ENCODE measurements at regions of chr3 and their contacts with region 1.

Region 1: GRCh38 chr3:184250167-184250828 is 826 bp downstream of the EEF1AKMT4 start:
- DNase-seq: peak; percentile 90
- H3K4me3 ChIP-seq: peak overlapping the region; percentile 74 to 97 (median 79)
- H3K27ac ChIP-seq: peak overlapping the region; percentile 73
- H3K4me1 ChIP-seq: peaks cover 6% of the 10 kb centered on the region
- H3K27me3 ChIP-seq: no peaks in the 10 kb centered on the region
- CTCF ChIP-seq: peak; percentile 96 to 98

Region 2: DNA sequence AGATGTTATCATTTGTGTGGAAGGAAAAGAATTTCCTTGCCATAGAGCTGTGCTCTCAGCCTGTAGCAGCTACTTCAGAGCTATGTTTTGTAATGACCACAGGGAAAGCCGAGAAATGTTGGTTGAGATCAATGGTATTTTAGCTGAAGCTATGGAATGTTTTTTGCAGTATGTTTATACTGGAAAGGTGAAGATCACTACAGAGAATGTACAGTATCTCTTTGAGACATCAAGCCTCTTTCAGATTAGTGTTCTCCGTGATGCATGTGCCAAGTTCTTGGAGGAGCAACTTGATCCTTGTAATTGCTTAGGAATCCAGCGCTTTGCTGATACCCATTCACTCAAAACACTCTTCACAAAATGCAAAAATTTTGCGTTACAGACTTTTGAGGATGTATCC is 599.7 kb before region 1 on chr3:
- CTCF ChIA-PET with region 1: no interaction called
- dilution Hi-C with region 1: no loop called
- in situ Hi-C with region 1: no loop called
- intact Hi-C with region 1: no loop called
- DNase-seq: no peak
- H3K4me3 ChIP-seq: no peak overlapping the region
- H3K27ac ChIP-seq: no peak overlapping the region
- H3K4me1 ChIP-seq: no peaks in the 10 kb centered on the region
- H3K27me3 ChIP-seq: no peaks in the 10 kb centered on the region
- CTCF ChIP-seq: no peak

Region 3: DNA sequence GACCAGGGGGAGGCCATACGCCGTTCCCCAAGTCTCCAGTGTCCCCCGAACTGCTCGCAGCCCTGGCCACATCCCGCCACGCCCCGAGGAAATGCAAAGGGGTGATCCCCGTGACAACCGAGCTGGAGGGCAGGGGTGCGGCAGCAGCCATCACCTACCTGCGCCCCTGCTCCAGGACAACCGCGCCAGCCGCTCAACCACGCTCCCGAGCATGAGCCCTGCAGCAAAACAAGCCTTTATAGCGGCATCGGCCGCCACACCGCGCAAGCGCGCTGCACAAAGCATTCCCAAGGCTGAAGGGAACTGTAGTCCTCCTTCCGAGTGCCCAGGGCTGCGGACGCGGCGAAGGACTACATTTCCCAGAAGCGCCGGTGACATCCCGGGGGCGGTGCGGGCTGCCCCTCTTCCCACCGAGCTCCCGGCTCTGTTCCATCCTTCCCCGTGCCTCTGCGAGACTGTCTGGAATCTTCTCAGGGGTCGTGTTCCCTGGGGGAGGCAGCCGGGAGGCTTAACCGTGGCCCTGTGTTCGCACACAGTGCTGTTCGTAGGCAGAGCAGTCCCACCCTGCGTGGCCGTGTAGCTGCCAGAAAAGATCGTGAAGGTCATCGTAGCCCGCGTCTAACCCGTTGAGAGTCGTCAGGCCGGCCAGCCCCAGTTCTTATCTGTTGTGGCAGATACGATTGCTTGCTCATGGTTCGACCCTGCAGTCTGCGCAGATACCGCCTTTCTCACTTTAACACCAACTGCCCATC is 232.4 kb before region 1 on chr3 and contains the start of gene ABCC5:
- CTCF ChIA-PET with region 1: interaction called, 3 read pairs
- dilution Hi-C with region 1: no loop called
- in situ Hi-C with region 1: no loop called
- intact Hi-C with region 1: loop called (anchors 1 kb)
- DNase-seq: peak; percentile 87
- H3K4me3 ChIP-seq: peak within 1 kb of the TSS; percentile 97 to 100 (median 100)
- H3K27ac ChIP-seq: peak within 1 kb of the TSS; percentile 35
- H3K4me1 ChIP-seq: peaks cover 17% of the 10 kb centered on the region
- H3K27me3 ChIP-seq: no peaks in the 10 kb centered on the region
- CTCF ChIP-seq: no peak
- total RNA-seq, gene ABCC5: 17.3 to 24.1 TPM

Region 4: GRCh38 chr3:184145111-184145524 is 105.2 kb before region 1 on chr3:
- CTCF ChIA-PET with region 1: no interaction called
- dilution Hi-C with region 1: no loop called
- in situ Hi-C with region 1: no loop called
- intact Hi-C with region 1: loop called (anchors 1 kb)
- DNase-seq: peak; percentile 67
- H3K4me3 ChIP-seq: no peak overlapping the region
- H3K27ac ChIP-seq: no peak overlapping the region
- H3K4me1 ChIP-seq: no peaks in the 10 kb centered on the region
- H3K27me3 ChIP-seq: no peaks in the 10 kb centered on the region
- CTCF ChIP-seq: peak; percentile 74 to 80

Region 5: DNA sequence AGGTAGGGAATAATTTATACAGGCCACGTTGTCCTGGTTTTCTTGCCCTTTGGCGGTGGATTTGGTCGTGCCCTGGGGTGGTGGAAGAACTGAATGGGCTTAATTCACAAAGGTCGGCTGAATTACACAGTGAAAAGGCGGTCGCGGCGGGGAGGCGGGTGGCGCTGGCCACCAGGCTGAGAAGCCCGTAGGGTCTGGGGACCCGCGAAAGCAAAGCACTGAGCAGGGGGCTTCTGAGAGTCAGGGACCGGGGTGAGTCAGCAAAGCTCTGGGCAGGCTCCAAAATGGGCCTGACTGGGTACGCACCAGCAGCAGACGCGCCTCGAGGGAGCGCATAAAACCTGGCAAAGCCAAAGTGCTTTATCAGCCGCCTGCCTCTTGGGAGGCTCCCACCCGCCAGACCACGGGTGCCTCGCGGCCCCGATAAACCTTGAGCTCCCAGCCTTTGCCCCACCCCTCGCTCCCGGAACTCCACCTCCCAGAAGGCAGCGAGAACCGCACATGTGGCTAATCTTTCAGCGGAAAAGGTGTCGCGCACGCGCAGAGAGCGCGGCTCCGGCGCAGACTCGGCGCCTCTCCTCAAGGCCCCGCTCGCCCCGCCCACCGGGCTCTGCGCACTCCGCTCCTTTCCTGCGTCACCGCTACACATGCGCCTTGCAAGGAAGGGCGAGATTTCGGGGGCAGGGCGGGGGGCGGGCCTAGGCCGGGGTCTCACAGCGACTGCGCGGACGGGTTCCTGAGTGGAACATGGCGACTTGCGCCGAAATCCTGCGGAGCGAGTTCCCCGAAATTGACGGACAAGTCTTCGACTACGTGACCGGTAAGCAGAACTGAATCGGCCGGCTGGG is 64.6 kb before region 1 on chr3 and contains the start of gene ABCF3:
- CTCF ChIA-PET with region 1: no interaction called
- dilution Hi-C with region 1: no loop called
- in situ Hi-C with region 1: no loop called
- intact Hi-C with region 1: loop called (anchors 2 kb)
- DNase-seq: peak; percentile 98
- H3K4me3 ChIP-seq: peak within 1 kb of the TSS; percentile 44 to 95 (median 71)
- H3K27ac ChIP-seq: peak within 1 kb of the TSS; percentile 54
- H3K4me1 ChIP-seq: peaks cover 19% of the 10 kb centered on the region
- H3K27me3 ChIP-seq: no peaks in the 10 kb centered on the region
- CTCF ChIP-seq: no peak
- total RNA-seq, gene ABCF3: 50.8 to 58.2 TPM

Region 6: GRCh38 chr3:184209146-184209923 is 41.0 kb before region 1 on chr3:
- CTCF ChIA-PET with region 1: no interaction called
- dilution Hi-C with region 1: no loop called
- in situ Hi-C with region 1: no loop called
- intact Hi-C with region 1: no loop called
- DNase-seq: no peak
- H3K4me3 ChIP-seq: no peak overlapping the region
- H3K27ac ChIP-seq: no peak overlapping the region
- H3K4me1 ChIP-seq: no peaks in the 10 kb centered on the region
- H3K27me3 ChIP-seq: no peaks in the 10 kb centered on the region
- CTCF ChIP-seq: no peak

Region 7: DNA sequence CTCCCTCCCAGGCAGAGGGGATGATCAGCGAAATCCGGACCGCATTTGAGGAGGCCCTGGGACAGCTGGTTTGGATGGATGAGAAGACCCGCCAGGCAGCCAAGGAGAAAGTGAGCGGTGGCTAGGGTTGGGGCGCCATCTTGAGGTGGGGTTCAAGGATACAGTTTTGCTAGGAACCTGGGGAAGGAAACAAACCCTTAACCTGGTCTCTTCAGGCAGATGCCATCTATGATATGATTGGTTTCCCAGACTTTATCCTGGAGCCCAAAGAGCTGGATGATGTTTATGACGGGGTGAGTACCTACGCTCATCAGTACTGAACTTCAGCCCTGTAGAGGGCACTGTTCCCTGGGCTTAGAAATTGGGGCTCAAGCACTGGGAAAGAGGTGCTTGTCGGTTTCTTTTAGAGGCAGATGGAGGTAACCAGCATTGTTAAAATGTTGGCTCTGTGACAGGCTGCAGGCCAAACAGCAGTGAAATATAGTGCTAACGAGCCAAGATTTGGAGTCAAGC is 39.2 kb after region 1 on chr3:
- CTCF ChIA-PET with region 1: no interaction called
- dilution Hi-C with region 1: no loop called
- in situ Hi-C with region 1: no loop called
- intact Hi-C with region 1: loop called (anchors 1 kb)
- DNase-seq: peak; percentile 59
- H3K4me3 ChIP-seq: no peak overlapping the region
- H3K27ac ChIP-seq: no peak overlapping the region
- H3K4me1 ChIP-seq: no peaks in the 10 kb centered on the region
- H3K27me3 ChIP-seq: no peaks in the 10 kb centered on the region
- CTCF ChIP-seq: peak; percentile 60 to 77

Region 8: DNA sequence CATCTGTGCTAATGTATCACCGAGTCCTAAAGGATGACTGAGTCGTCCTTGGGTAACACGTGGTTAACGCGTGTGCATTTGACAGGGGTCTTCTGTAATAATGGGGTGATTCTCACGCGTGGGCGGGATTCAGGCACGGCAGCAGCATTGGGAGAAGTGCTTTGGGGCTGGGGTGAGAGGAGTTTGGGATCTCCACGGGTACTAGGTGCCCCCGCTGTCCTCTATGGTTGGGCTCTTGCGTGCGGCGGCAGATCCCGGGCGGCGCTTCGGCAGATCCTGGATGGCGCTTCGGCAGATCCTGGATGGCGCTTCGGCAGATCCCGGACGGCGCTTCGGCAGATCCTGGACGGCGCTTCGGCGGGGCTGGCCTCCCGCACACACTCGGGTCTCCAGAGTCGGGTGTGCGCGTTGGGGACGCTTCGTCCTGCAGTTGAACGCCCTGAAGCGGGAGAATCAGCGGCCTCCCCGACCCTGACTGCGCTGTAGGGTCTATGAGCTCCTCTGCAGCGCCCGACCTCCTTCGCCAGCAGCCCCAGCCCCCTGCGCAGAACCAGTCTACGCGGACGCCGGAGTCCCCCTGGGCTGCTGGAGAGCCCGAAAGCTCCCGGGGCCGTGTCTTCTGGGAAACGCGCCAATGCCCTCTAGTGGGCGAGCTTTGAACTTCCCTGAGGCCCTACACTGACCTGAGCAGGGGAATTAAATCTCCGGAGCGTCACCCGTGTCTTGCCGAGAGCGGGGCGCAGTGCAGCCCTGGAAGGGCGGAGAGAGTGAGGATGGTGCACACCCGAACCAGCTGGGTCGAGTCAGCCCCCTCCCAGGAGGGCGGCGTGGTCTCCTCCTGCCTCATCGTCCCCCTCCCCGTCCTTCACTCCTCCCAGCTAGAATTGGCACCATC is 263.2 kb after region 1 on chr3:
- CTCF ChIA-PET with region 1: no interaction called
- dilution Hi-C with region 1: no loop called
- in situ Hi-C with region 1: no loop called
- intact Hi-C with region 1: no loop called
- DNase-seq: peak; percentile 63
- H3K4me3 ChIP-seq: peak overlapping the region; percentile 41 to 62 (median 54)
- H3K27ac ChIP-seq: no peak overlapping the region
- H3K4me1 ChIP-seq: peaks cover 6% of the 10 kb centered on the region
- H3K27me3 ChIP-seq: peaks cover 3% of the 10 kb centered on the region
- CTCF ChIP-seq: peak; percentile 63 to 85

Region 9: GRCh38 chr3:185717121-185717520 is 1466.8 kb after region 1 on chr3:
- CTCF ChIA-PET with region 1: no interaction called
- dilution Hi-C with region 1: no loop called
- in situ Hi-C with region 1: no loop called
- intact Hi-C with region 1: no loop called
- DNase-seq: peak; percentile 62
- H3K4me3 ChIP-seq: no peak overlapping the region
- H3K27ac ChIP-seq: peak overlapping the region; percentile 90
- H3K4me1 ChIP-seq: peaks cover 59% of the 10 kb centered on the region
- H3K27me3 ChIP-seq: no peaks in the 10 kb centered on the region
- CTCF ChIP-seq: no peak

Measured in mammary epithelial cell (primary cell).